Ascending aorta (tissue), 2 donors: ENCODE measurements at regions of chr10 and their contacts with region 1.

Region 1: GRCh38 chr10:613271-614138 is 76.0 kb downstream of the DIP2C start:
- DNase-seq: no peak
- H3K4me3 ChIP-seq: peak overlapping the region in 1 of 2 donors; percentile 18
- H3K27ac ChIP-seq: peak overlapping the region in 1 of 2 donors; percentile 19
- H3K4me1 ChIP-seq: peaks cover 3 to 27% of the 10 kb centered on the region in 2 donors
- H3K27me3 ChIP-seq: no peaks in the 10 kb centered on the region
- CTCF ChIP-seq: no peak

Region 2: GRCh38 chr10:649798-650440 is 36.4 kb after region 1 on chr10:
- intact Hi-C with region 1: loop called (anchors 5 kb)
- DNase-seq: peak in 1 of 2 donors; percentile 61
- H3K4me3 ChIP-seq: peak overlapping the region; percentile 37 to 57
- H3K27ac ChIP-seq: peak overlapping the region in 1 of 2 donors; percentile 60
- H3K4me1 ChIP-seq: peaks cover 0 to 12% of the 10 kb centered on the region in 2 donors
- H3K27me3 ChIP-seq: no peaks in the 10 kb centered on the region
- CTCF ChIP-seq: no peak

Region 3: DNA sequence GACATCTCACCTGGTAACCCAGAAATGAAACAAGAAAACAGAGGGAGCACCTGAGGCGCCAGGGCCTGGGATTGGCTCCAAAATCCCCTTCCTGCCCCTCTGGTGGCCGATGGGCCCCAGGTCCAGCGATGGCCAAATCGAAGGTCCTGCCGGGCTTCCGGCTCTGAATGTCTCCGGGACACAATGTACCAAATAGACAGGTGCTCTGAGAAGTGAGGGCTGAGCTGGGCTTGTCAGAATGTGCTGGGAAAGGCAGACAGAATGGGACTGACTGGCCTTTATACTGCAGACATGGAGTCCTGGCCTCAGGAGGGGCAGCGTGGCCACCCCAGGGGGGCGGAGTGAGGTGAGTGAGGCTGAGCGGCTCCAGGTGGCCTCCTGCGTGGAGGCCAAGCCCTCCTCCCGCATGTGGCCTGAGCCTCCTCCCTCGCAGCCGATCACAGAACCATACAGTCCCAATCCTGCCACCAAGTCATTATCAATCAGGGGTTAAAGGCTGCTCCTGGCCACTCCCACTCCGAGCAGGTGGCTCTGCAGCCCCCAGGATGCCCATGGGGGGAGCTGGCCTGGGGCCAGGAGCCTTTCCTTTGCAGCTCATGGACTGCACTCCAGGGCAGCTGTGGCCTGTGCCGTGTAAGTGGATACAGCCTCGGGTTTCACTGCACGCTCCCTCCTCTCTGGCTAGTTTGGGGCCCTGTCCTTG is 938.3 kb after region 1 on chr10:
- intact Hi-C with region 1: no loop called
- DNase-seq: no peak
- H3K4me3 ChIP-seq: no peak overlapping the region
- H3K27ac ChIP-seq: no peak overlapping the region
- H3K4me1 ChIP-seq: no peaks in the 10 kb centered on the region
- H3K27me3 ChIP-seq: no peaks in the 10 kb centered on the region
- CTCF ChIP-seq: no peak